Mucosa of descending colon (tissue), 3 donors: ENCODE measurements at regions of chr16 and their contacts with region 1.

Region 1: DNA sequence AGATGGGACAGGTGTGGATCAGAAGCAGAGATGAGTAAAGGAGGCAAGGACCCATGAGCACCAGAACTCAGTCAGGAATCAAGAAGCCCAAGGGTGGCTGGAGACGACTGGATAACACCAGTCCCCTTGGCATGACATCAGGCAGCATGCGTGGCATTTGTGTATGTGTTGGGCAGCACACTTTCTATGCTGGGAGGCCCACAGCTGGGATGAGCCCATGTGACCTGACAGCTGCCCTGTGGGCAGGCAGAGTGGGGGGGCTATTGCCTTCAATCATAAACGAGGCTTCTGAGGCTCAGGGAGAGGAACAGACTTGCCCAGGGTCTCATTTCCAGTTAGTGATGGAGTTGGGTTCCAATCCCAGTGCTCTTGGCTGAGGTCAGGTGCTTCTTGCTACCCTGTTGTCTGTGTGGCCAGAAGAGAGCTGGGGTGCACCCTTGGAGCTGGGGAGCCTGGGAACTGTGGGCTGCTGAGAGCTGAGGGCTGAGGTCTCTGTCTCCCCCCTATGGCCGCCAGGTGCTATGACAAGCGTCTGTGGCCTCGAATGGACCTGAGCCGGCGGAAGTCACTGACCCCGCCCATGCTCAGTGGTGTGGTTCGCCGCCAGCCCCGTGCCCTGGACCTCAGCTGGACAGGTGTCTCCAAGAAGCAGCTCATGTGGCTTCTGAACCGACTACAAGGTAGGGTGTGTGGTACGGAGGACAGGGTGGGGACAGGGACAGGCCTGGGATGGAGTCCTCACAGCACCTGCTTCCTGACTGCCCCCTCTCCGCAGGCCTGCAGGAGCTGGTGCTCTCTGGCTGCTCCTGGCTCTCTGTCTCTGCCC is 7.1 kb upstream of the ORAI3 start:
- DNase-seq: peak; percentile 81 to 88 (median 85)
- ATAC-seq: peak; percentile 97
- H3K4me3 ChIP-seq: no peak overlapping the region
- H3K4me1 ChIP-seq: peaks cover 15% of the 10 kb centered on the region
- CTCF ChIP-seq: peak; percentile 89

Region 2: DNA sequence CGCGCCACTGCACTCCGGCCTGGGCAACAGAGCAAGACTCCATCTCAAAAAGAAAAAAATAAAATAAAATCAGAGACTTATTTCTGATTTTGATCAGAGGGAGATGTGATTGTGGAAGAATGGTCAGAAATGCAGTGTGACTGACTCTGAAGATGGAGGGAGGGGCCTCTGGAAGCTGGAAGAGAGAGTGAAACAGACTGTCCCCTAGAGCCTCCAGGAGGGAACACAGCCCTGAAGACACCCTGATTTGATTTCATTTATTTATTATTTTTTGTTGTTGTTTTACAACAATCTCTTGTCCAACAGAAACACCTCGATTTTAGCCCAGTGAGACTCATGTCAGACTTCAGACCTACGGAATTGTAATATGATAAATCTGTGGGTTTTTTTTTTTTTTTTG is 74.1 kb before region 1 on chr16:
- intact Hi-C with region 1: loop called in 1 of 2 experiments (anchors 5 kb)
- DNase-seq: no peak
- ATAC-seq: no peak
- H3K4me3 ChIP-seq: no peak overlapping the region
- H3K4me1 ChIP-seq: no peaks in the 10 kb centered on the region
- CTCF ChIP-seq: no peak

Region 3: DNA sequence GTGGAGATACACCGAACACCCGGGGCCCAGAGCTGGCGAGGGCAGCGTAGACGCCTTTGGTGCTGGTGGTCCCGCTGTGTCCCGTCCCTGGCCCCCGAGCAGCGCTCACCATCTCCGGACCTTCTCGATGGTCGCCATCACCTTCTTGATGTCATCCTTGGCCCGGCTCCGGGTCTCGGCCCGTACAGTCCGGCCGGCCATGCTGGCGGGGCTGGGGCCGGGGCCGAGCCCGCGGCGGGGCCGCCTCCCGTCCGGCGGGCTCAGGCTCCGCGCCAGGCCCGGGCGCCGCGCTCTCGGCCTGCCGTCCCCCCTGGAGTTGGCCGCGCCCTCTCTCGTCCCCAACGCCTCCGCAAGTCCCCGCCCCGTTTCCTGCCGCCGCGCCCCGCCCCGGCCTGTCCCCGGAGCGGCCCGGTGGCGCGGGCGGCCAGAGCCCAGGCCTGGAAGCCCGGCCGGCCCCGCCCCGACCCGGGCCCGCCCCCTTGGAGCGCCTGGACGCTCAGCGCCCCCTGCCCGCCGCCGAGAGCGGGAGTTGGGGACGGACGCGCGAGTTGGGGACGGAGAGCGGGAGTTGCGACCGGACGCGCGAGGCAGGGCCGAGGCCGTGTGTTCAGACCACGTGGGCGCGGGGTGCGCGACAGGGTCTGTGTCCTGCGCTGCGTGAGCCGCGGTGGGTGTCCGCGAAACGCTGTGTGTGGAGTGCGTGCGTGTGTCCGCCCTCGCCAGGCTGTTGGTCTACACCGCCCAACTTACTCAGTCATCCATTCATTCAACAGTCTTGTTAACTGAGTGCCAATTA is 47.9 kb before region 1 on chr16 and contains the start of gene BCL7C:
- intact Hi-C with region 1: no loop called
- DNase-seq: peak; percentile 94 to 98 (median 96)
- ATAC-seq: peak; percentile 93
- H3K4me3 ChIP-seq: peak within 1 kb of the TSS; percentile 67
- H3K4me1 ChIP-seq: peaks cover 20% of the 10 kb centered on the region
- CTCF ChIP-seq: peak; percentile 60
- total RNA-seq, gene BCL7C: 20.8 to 30.6 (median 25.3) TPM